Ascending aorta (tissue), 2 donors: ENCODE measurements at regions of chr1 and their contacts with region 1.

Region 1: GRCh38 chr1:170586321-170587252 is 54.6 kb downstream of the GORAB start:
- DNase-seq: peak in 1 of 2 donors; percentile 70
- H3K4me3 ChIP-seq: peak overlapping the region; percentile 32 to 64
- H3K27ac ChIP-seq: peak overlapping the region; percentile 81 to 85
- H3K4me1 ChIP-seq: peaks cover 0 to 11% of the 10 kb centered on the region in 2 donors
- H3K27me3 ChIP-seq: no peaks in the 10 kb centered on the region
- CTCF ChIP-seq: no peak

Region 2: DNA sequence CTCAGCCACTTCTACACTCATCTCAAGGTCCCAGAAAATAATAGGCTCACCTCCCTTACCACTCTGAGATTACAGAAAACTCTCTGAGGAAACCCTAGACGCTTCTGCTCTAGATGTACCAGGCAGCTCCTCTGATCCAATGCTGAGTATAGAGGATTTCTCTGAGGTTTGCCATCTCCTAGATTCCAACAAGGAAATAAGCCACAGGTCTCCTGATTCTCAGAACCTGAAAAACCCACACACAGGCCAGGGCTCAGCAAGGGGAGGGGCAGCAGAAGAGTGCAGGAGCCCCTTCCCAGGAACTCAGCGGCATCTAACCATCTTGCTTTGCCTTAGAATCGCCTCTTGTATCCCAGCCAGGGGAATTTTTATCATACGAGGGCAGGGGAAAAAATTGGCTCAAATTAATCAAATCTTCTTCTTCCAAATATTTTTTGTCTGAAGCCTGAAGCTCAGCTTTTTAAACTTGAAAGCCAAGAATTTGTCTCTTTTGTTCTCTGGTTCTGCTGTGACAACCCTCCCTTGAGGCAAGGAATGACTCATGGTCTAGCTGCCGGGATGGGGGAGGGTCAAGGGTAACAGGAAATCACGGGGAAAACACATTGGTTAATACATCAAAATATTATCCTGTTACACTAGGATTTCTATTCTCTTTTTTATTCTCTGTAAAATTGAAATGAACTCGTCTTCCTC is 23.8 kb before region 1 on chr1:
- intact Hi-C with region 1: loop called (anchors 2 kb)
- DNase-seq: peak; percentile 53 to 82
- H3K4me3 ChIP-seq: peak overlapping the region; percentile 17 to 48
- H3K27ac ChIP-seq: peak overlapping the region; percentile 74 to 78
- H3K4me1 ChIP-seq: peaks cover 4 to 23% of the 10 kb centered on the region in 2 donors
- H3K27me3 ChIP-seq: no peaks in the 10 kb centered on the region
- CTCF ChIP-seq: no peak

Region 3: GRCh38 chr1:170698301-170699275 is 112.0 kb after region 1 on chr1:
- intact Hi-C with region 1: no loop called
- DNase-seq: no peak
- H3K4me3 ChIP-seq: peak overlapping the region in 1 of 2 donors; percentile 50
- H3K27ac ChIP-seq: peak overlapping the region; percentile 67 to 81
- H3K4me1 ChIP-seq: peaks cover 17 to 58% of the 10 kb centered on the region in 2 donors
- H3K27me3 ChIP-seq: no peaks in the 10 kb centered on the region
- CTCF ChIP-seq: no peak